ENCODE measurements at regions of chr9 and their contacts with region 1.

Region 1: DNA sequence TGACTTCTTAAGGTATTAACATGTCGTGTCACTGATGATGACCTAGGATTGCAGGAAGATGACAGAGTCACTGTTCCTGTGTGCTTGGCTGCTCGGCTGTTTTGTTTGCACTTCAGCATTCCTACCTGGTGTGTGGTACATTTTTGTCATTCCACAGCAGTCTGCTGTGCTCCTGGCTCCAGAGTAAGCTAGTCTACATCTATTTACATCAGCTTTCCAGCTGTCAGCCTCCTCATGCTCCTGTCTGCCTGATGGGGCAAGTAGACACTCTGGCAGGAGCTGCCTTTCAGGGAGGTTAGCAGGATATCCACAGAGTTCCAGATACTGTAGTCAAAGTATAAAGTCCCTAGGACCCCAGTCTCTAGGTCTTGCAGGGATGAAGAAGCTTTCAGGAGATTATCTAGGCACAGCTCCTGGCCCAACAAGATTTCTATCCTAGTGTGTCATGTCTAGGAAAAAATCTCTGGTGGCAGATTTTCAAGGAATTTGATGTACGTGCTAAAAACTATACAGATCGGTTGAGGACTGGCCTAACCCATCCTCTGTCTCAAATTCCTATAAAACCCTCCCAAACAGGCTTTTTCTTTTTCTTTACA is 28.4 kb downstream of the RUSC2 start:
- DNase-seq: peak in 1 of 2 donors; percentile 83
- H3K4me3 ChIP-seq: no peak overlapping the region
- H3K27ac ChIP-seq: peak overlapping the region; percentile 94 to 95
- H3K4me1 ChIP-seq: peaks cover 31 to 88% of the 10 kb centered on the region in 2 donors
- H3K27me3 ChIP-seq: no peaks in the 10 kb centered on the region
- CTCF ChIP-seq: no peak

Region 2: GRCh38 chr9:35272989-35273388 is 245.3 kb before region 1 on chr9:
- intact Hi-C with region 1: no loop called
- DNase-seq: no peak
- H3K4me3 ChIP-seq: no peak overlapping the region
- H3K27ac ChIP-seq: no peak overlapping the region
- H3K4me1 ChIP-seq: peaks cover 3 to 5% of the 10 kb centered on the region in 2 donors
- H3K27me3 ChIP-seq: no peaks in the 10 kb centered on the region
- CTCF ChIP-seq: no peak

Region 3: GRCh38 chr9:35538361-35539234 is 20.3 kb after region 1 on chr9:
- intact Hi-C with region 1: loop called (anchors 2 kb)
- DNase-seq: peak; percentile 50 to 89
- H3K4me3 ChIP-seq: peak overlapping the region; percentile 40 to 49
- H3K27ac ChIP-seq: peak overlapping the region; percentile 88 to 93
- H3K4me1 ChIP-seq: peaks cover 18 to 57% of the 10 kb centered on the region in 2 donors
- H3K27me3 ChIP-seq: no peaks in the 10 kb centered on the region
- CTCF ChIP-seq: no peak

Region 4: GRCh38 chr9:35563791-35564197 is 45.5 kb after region 1 on chr9:
- intact Hi-C with region 1: loop called (anchors 2 kb)
- DNase-seq: peak in 1 of 2 donors; percentile 85
- H3K4me3 ChIP-seq: peak overlapping the region; percentile 17 to 19
- H3K27ac ChIP-seq: peak overlapping the region; percentile 83 to 94
- H3K4me1 ChIP-seq: peaks cover 23 to 52% of the 10 kb centered on the region in 2 donors
- H3K27me3 ChIP-seq: no peaks in the 10 kb centered on the region
- CTCF ChIP-seq: no peak

Measured in ascending aorta (tissue), 2 donors.